A673 (cell line): ENCODE measurements at regions of chr11 and their contacts with region 1.

Region 1: DNA sequence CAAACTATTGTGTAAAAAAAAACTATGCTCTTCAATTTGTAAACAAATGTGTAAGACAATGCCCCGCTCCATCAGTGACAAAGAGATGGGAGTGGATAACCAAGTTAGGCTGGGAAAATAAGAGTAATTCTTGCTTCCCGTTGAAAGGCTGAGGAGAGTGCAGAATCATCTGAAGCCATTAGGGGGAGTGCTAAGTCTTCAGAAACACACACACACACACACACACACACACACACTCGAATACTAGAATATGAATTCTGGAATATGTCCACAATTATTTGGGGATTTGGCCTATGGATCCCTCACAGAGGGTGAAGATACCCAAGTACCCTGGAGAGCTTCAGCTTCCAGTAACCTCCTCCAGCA is 27.8 kb upstream of the ROBO3 start:
- DNase-seq: peak; percentile 92
- H3K4me3 ChIP-seq: no peak overlapping the region
- H3K27ac ChIP-seq: no peak overlapping the region
- H3K4me1 ChIP-seq: peaks cover 13% of the 10 kb centered on the region
- H3K27me3 ChIP-seq: peaks cover 49% of the 10 kb centered on the region
- CTCF ChIP-seq: peak; percentile 67

Region 2: DNA sequence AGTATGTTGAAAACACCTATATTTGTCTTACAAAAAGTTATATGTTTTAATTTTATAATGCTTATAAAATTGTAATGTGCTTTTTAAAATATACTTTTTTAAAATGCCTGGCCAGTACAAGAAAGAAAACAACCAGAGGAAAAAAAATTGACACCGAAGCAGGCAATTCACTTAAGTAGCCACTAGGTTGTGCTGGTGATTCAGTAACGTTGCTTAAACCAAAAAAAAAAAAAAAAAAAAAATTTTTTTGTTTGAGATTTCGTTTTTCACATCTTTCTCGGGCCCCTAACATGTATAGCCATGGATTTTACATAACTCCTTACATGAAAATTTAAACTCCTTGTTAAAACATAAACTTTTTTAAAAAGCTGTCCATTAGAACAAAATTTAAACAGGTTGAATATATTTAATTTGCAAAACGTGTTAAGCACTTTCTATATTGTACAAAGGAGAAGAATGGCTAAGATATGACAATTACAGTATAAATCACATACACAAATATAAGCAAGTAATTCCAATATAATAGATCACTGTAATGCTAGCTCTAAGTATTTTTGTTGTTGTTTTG is 422.0 kb before region 1 on chr11:
- CTCF ChIA-PET with region 1: interaction called, 3 read pairs
- POLR2A ChIA-PET with region 1: no interaction called
- intact Hi-C with region 1: loop called (anchors 5 kb)
- DNase-seq: peak; percentile 60
- H3K4me3 ChIP-seq: no peak overlapping the region
- H3K27ac ChIP-seq: no peak overlapping the region
- H3K4me1 ChIP-seq: no peaks in the 10 kb centered on the region
- H3K27me3 ChIP-seq: no peaks in the 10 kb centered on the region
- CTCF ChIP-seq: peak; percentile 91

Region 3: GRCh38 chr11:124644426-124645280 is 192.8 kb before region 1 on chr11:
- CTCF ChIA-PET with region 1: interaction called, 5 read pairs
- POLR2A ChIA-PET with region 1: no interaction called
- intact Hi-C with region 1: loop called (anchors 1 kb)
- DNase-seq: peak; percentile 88
- H3K4me3 ChIP-seq: no peak overlapping the region
- H3K27ac ChIP-seq: no peak overlapping the region
- H3K4me1 ChIP-seq: peaks cover 6% of the 10 kb centered on the region
- H3K27me3 ChIP-seq: no peaks in the 10 kb centered on the region
- CTCF ChIP-seq: peak; percentile 98

Region 4: GRCh38 chr11:124673333-124674167 is 163.9 kb before region 1 on chr11 and contains the starts of genes SIAE and SPA17:
- CTCF ChIA-PET with region 1: interaction called, 16 read pairs
- POLR2A ChIA-PET with region 1: no interaction called
- intact Hi-C with region 1: loop called (anchors 1 kb)
- DNase-seq: peak; percentile 97
- H3K4me3 ChIP-seq: peak within 1 kb of the TSS; percentile 73
- H3K27ac ChIP-seq: peak within 1 kb of the TSS; percentile 76
- H3K4me1 ChIP-seq: peaks cover 10% of the 10 kb centered on the region
- H3K27me3 ChIP-seq: no peaks in the 10 kb centered on the region
- CTCF ChIP-seq: no peak
- total RNA-seq, gene SIAE: 11.2 and 12.0 TPM in 2 replicates
- total RNA-seq, gene SPA17: 22.9 and 25.8 TPM in 2 replicates

Region 5: GRCh38 chr11:124758317-124759203 is 78.9 kb before region 1 on chr11:
- CTCF ChIA-PET with region 1: interaction called, 4 read pairs
- POLR2A ChIA-PET with region 1: no interaction called
- intact Hi-C with region 1: loop called (anchors 2 kb)
- DNase-seq: peak; percentile 88
- H3K4me3 ChIP-seq: peak overlapping the region; percentile 37
- H3K27ac ChIP-seq: no peak overlapping the region
- H3K4me1 ChIP-seq: peaks cover 10% of the 10 kb centered on the region
- H3K27me3 ChIP-seq: no peaks in the 10 kb centered on the region
- CTCF ChIP-seq: peak; percentile 94

Region 6: DNA sequence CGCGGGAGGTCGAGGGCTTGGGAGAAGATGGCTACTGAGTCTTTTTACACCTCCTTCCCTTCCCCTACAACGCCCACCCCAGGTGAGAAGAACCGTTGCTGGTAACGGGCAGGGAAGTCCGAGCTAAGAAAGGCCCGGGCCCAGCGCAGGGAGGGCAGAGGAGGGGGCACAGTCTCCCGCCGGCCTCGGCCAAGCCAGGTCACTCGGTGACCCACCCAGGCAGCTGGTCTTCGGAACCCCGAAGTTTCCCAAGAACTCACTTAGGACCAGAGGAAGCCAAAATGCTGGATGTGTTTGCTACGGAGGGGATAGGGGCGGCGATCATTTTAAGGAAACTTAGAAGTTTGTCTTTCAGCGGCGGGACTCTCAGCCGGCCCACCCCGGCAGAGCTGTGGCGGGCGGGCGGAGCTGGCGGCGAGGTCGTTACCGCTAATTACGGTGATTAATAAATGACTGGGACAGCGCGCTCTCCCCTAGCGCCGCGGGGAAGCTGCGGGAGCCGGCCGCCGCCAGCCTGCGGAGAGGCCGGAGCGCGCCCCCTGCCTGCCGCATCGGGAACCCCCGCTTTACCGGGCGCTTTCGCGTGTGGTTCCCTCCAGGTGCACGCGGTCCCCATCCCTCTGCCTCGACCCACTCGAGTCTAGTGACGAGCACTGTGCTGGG is 28.6 kb after region 1 on chr11:
- CTCF ChIA-PET with region 1: interaction called, 9 read pairs
- POLR2A ChIA-PET with region 1: no interaction called
- intact Hi-C with region 1: loop called (anchors 1 kb)
- DNase-seq: peak; percentile 60
- H3K4me3 ChIP-seq: peak overlapping the region; percentile 30
- H3K27ac ChIP-seq: no peak overlapping the region
- H3K4me1 ChIP-seq: peaks cover 8% of the 10 kb centered on the region
- H3K27me3 ChIP-seq: peaks cover 92% of the 10 kb centered on the region
- CTCF ChIP-seq: peak; percentile 92

Region 7: DNA sequence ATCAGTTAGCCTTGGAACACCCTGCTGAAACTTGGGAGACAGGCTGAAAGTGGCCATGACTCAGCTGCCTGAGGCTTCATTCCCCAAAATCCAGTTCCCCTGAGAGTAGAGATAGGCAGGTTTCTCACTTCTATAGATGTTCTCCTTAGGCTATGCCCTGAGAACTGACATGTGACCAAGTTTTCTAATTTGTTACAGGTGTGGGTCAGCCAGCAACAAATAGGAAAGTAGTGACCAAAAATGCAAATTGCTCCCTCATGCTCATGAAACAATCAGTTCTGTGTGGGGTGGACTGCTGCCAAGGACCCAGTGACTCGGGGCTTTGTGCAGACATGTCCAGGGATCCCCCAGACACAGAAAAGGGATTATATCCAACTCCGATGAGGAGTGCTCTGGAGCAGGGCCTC is 109.3 kb after region 1 on chr11:
- CTCF ChIA-PET with region 1: no interaction called
- POLR2A ChIA-PET with region 1: no interaction called
- intact Hi-C with region 1: no loop called
- DNase-seq: no peak
- H3K4me3 ChIP-seq: no peak overlapping the region
- H3K27ac ChIP-seq: no peak overlapping the region
- H3K4me1 ChIP-seq: no peaks in the 10 kb centered on the region
- H3K27me3 ChIP-seq: no peaks in the 10 kb centered on the region
- CTCF ChIP-seq: no peak

Region 8: DNA sequence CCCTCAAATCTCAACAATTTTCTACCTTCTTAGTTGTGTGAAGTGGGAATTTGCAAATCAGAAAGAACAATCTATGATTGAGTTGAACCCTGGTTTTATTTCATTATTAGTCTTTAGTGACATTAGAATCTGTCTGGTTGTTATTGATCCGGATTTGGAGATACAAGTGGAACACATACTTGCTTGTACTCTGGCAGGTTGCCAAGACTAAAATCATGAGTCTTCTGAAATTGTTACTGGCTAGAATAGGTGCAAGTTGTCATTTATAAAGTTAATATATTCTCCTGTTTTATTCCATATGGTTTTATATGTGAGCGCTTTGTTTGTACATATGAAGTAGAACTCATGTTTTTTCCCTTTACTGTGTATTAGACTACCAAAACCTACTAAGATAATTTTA is 139.5 kb after region 1 on chr11:
- CTCF ChIA-PET with region 1: no interaction called
- POLR2A ChIA-PET with region 1: no interaction called
- intact Hi-C with region 1: no loop called
- DNase-seq: peak; percentile 10
- H3K4me3 ChIP-seq: no peak overlapping the region
- H3K27ac ChIP-seq: no peak overlapping the region
- H3K4me1 ChIP-seq: no peaks in the 10 kb centered on the region
- H3K27me3 ChIP-seq: no peaks in the 10 kb centered on the region
- CTCF ChIP-seq: no peak

Region 9: DNA sequence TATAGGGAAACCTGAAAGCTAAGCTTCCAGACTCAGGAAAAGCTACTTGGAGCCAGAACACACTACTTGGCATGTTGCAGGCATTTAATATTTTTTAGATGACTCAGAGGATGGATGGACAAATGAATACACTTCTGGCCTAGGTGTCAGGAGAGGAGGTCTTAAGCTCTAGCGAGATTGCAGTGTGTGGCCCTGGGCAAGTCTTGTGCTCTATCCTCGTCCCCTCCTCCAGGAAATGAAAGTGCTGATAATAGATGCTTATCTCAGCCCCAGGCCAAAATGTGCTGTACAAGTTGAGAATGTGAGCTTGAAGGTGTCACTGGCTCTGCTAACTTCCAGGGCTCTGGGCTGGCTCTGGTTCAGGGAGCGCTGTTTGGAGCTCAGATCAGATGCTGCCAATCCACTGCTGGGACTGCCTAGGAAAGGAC is 463.3 kb after region 1 on chr11:
- CTCF ChIA-PET with region 1: no interaction called
- POLR2A ChIA-PET with region 1: interaction called, 13 read pairs
- intact Hi-C with region 1: no loop called
- DNase-seq: no peak
- H3K4me3 ChIP-seq: no peak overlapping the region
- H3K27ac ChIP-seq: no peak overlapping the region
- H3K4me1 ChIP-seq: no peaks in the 10 kb centered on the region
- H3K27me3 ChIP-seq: no peaks in the 10 kb centered on the region
- CTCF ChIP-seq: no peak